HepG2 (cell line): ENCODE measurements at regions of chr6 and their contacts with region 1.

Region 1: DNA sequence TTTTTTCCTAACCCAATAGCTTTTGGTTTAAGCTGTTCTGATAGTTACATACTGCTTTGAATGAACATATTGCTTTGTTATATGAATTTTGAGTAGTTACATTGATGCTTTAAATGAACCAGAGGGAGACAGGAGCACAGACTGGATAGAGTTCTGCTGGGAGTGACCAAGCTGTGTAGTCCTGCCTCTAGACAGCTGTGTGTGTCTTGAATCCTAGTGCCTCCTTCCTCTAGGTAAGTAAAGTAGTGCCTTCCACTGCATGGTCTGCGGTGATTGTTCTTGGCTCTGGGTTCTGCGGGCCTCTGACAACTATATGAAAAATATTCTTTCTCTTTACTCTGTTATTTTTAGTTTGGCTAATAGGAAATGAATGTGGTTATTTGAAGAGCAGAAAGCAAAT is 46.0 kb upstream of the ADGRG6 start:
- DNase-seq: no peak
- ATAC-seq: no peak
- H3K4me3 ChIP-seq: no peak overlapping the region
- H3K27ac ChIP-seq: no peak overlapping the region
- H3K4me1 ChIP-seq: peaks cover 69% of the 10 kb centered on the region
- H3K27me3 ChIP-seq: no peaks in the 10 kb centered on the region
- CTCF ChIP-seq: no peak
- EP300 ChIP-seq: no peak
- POLR2A ChIP-seq: no peak
- RAD21 ChIP-seq: no peak

Region 2: DNA sequence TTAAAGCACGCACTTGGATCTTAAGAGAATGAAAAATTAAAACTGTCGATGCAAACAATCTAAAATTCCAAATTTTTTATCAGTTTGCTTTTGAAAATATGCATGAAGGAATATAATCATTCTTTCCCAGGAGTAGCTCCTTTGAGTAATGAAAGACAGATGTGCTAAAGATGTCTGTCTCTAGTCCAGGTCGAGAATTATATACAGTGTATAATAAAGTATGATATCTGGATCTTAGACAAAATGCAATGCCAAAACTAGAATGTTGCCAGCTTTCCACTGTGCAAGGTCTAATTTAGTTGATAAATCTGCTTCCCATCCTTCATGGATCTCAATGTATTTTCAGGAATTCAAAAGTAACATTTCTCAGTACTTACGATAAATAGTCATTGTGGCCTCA is 19.1 kb before region 1 on chr6:
- CTCF ChIA-PET with region 1: no interaction called
- POLR2A ChIA-PET with region 1: interaction called, 18 read pairs
- in situ Hi-C with region 1: no loop called
- intact Hi-C with region 1: no loop called
- DNase-seq: no peak
- ATAC-seq: no peak
- H3K4me3 ChIP-seq: no peak overlapping the region
- H3K27ac ChIP-seq: no peak overlapping the region
- H3K4me1 ChIP-seq: peaks cover 26% of the 10 kb centered on the region
- H3K27me3 ChIP-seq: no peaks in the 10 kb centered on the region
- CTCF ChIP-seq: no peak
- EP300 ChIP-seq: no peak
- POLR2A ChIP-seq: no peak
- RAD21 ChIP-seq: no peak

Region 3: DNA sequence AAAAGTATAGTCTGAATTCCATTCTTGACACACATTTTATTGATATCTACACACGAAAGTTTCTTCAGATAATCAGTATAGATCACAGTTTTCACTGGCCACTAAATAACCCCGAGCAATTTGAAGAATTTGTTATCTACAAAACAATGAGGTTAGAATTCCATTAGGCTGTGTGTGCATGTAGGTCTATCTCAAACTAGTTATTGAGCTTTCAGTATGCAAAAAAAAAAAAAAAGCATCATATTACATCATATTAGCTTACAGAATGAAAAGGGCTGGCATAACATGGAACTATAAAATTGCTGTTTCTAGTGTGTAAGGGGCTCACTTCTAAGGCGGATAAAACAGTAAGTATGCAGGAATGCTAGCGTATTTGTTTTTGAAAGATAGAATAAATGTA is 13.5 kb before region 1 on chr6:
- CTCF ChIA-PET with region 1: no interaction called
- POLR2A ChIA-PET with region 1: interaction called, 7 read pairs
- in situ Hi-C with region 1: no loop called
- intact Hi-C with region 1: loop called (anchors 1 kb)
- DNase-seq: no peak
- ATAC-seq: no peak
- H3K4me3 ChIP-seq: no peak overlapping the region
- H3K27ac ChIP-seq: no peak overlapping the region
- H3K4me1 ChIP-seq: peaks cover 8% of the 10 kb centered on the region; the same call in 1 of the 2 replicates
- H3K27me3 ChIP-seq: no peaks in the 10 kb centered on the region
- CTCF ChIP-seq: no peak
- EP300 ChIP-seq: no peak
- POLR2A ChIP-seq: no peak
- RAD21 ChIP-seq: no peak

Region 4: GRCh38 chr6:142279350-142280180 is 23.8 kb after region 1 on chr6:
- CTCF ChIA-PET with region 1: no interaction called
- POLR2A ChIA-PET with region 1: interaction called, 19 read pairs
- in situ Hi-C with region 1: no loop called
- intact Hi-C with region 1: no loop called
- DNase-seq: peak; percentile 81
- ATAC-seq: peak; percentile 76
- H3K4me3 ChIP-seq: peak overlapping the region in 1 of 3 experiments; percentile 6; a peak in 1 of 6 replicates
- H3K27ac ChIP-seq: peak overlapping the region; percentile 46
- H3K4me1 ChIP-seq: peaks cover 37% of the 10 kb centered on the region
- H3K27me3 ChIP-seq: no peaks in the 10 kb centered on the region
- CTCF ChIP-seq: no peak
- EP300 ChIP-seq: peak in 1 of 2 experiments; percentile 80; a peak in 2 of 4 replicates
- POLR2A ChIP-seq: no peak
- RAD21 ChIP-seq: no peak

Region 5: GRCh38 chr6:142331075-142331551 is 75.3 kb after region 1 on chr6:
- CTCF ChIA-PET with region 1: no interaction called
- POLR2A ChIA-PET with region 1: interaction called, 5 read pairs
- in situ Hi-C with region 1: no loop called
- intact Hi-C with region 1: loop called (anchors 2 kb)
- DNase-seq: peak; percentile 100
- ATAC-seq: peak; percentile 97
- H3K4me3 ChIP-seq: peak overlapping the region; percentile 21 to 36 (median 34); a peak in 4 of 6 replicates
- H3K27ac ChIP-seq: peak overlapping the region; percentile 80
- H3K4me1 ChIP-seq: peaks cover 98% of the 10 kb centered on the region
- H3K27me3 ChIP-seq: no peaks in the 10 kb centered on the region
- CTCF ChIP-seq: no peak
- EP300 ChIP-seq: peak; percentile 46 to 99; a peak in 3 of 4 replicates
- POLR2A ChIP-seq: no peak
- RAD21 ChIP-seq: peak; percentile 27; the same call in 1 of the 2 replicates